Activated B cell treated with CpG ODN at 0.5 μM for 24 hours (primary cell): ENCODE measurements at regions of chr20 and their contacts with region 1.

Region 1: DNA sequence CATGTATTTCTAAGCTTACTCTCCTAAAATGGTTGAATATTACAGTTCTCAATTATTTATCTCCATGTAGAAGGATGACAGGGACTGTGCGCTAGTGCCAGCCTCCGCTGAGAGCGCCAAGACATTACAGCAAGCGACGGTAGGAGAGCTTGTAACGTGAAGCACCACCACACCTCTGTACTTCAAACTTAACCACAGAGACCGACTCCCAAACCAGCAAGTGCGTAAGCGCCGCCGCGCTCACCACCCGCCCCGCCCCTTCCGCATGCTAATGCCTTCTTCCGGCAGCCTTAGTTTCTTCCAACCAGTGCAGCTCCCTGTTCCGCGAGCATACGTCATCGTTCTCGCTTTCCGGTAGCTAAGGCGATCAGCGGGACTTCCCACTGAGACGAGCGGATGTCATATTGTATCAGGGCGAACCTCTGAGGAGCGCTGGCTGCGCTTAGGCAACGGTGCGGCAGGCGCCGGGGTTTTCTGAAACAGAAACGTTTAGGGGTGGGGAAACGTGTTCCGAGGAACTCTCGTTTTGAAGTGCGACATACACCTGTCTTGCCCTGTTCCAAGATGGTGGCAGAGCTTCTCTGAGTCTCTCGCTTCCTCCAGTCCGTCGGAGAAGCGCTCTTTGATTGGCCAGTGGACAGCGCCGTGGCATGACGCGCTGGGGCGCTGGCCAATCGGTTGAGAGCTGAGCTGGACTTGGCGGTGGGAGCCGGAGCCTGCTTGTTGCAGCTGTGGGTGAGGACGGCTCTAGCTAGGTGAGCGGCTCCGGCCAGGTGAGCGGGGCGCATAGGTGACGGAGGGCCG is at the start of gene SEC23B:
- DNase-seq: peak; percentile 92
- ATAC-seq: peak; percentile 92
- H3K4me3 Mint-ChIP-seq: peak within 1 kb of the TSS; percentile 100
- H3K27ac Mint-ChIP-seq: peak within 1 kb of the TSS; percentile 100
- H3K4me1 Mint-ChIP-seq: peaks cover 36% of the 10 kb centered on the region
- H3K27me3 Mint-ChIP-seq: peaks cover 2% of the 10 kb centered on the region
- CTCF ChIP-seq: no peak
- total RNA-seq, gene SEC23B: 52.0 and 56.6 TPM in 2 replicates

Region 2: DNA sequence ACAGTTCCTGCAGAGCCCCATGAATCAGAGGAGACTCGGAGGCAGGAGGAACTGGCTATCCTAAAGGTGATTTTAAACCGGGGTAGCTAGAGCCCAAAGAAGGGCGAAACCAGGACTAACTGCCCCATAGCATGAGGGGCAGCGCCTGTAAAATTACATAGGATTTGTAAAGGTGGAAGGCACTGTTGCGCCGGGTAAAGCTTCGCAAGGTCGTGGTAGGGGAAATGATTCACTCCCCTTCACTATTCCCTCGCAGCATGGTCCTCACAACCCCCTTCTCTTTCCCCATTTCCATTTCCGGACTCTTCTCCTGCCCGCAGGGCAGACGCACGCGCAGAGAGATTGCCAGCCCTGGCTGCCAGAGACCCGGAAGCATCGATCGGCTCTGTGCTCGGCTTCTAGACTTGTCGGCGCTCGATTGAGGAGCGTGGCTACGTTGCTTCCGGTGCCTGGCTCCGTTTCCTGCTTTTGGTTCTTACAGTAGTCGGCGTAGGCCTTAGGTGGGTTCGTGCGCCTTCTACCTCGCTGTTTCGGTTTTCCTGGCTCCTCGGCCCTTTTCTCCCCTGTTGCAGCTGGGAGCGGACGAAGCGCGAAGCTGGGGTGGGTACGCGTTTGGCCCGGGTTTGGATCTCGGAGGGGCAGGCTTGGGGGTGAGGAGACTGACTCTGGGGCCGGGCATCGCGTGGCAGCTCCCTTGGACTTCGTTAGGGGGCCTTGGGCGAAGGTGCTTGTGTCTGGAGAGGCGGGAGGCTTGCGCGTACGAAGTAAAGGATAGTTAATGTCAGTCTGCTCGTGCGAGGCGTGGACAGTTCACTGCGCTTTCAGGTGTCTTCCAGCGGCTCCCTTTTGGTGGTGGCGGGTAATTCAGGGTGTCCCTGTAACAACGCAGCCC is 1777.6 kb before region 1 on chr20 and contains the start of gene SNRPB2:
- CTCF ChIA-PET with region 1: no interaction called
- POLR2A ChIA-PET with region 1: no interaction called
- intact Hi-C with region 1: loop called (anchors 2 kb)
- DNase-seq: peak; percentile 76
- ATAC-seq: peak; percentile 97
- H3K4me3 Mint-ChIP-seq: peak within 1 kb of the TSS; percentile 100
- H3K27ac Mint-ChIP-seq: peak within 1 kb of the TSS; percentile 99
- H3K4me1 Mint-ChIP-seq: peaks cover 31% of the 10 kb centered on the region
- H3K27me3 Mint-ChIP-seq: peaks cover 17% of the 10 kb centered on the region
- CTCF ChIP-seq: no peak
- total RNA-seq, gene SNRPB2: 61.1 and 66.3 TPM in 2 replicates

Region 3: DNA sequence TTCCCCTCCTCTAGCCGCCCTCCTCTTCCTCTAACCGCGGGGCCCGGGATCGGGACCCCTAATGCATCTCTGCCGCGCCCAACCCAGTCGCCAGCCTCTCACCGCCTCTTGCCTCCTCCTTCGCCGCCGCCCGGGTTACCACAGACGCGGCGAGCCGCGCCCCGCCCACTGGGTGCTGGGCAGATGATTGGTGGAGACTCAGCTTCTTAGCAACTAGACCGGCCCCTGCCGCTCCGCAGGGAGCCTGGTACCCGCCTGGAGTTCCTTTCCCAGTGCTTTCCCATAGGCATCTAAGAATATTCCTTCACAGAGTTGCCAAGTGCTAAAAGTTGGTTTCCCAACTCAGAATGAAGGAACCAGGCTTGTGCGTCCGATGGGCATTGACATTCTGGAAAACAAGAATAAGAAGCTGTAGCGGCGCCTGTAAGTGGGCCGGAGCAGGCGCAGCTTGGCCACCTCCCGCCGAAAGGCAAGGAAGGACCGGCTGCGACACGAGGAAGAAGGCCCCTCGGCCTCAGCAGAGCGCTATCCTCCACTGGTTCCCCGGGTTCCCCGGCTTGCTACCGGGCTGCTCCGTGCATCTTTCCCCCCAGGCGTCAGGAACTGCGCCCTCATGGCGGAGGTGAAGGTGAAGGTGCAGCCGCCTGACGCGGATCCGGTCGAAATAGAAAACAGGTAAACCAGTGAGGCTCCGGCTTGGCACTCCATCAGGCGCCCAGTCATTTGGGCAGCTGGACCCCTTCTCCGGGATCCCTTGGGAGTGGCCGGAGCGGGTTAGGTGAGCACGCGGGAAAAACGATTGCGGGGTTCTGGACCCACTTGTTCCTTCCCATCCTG is 40.3 kb before region 1 on chr20 and contains the starts of genes DZANK1 and POLR3F:
- CTCF ChIA-PET with region 1: interaction called, 6 read pairs
- POLR2A ChIA-PET with region 1: interaction called, 72 read pairs
- intact Hi-C with region 1: loop called (anchors 1 kb)
- DNase-seq: peak; percentile 88
- ATAC-seq: peak; percentile 96
- H3K4me3 Mint-ChIP-seq: peak within 1 kb of the TSS; percentile 99
- H3K27ac Mint-ChIP-seq: peak within 1 kb of the TSS; percentile 95
- H3K4me1 Mint-ChIP-seq: peaks cover 27% of the 10 kb centered on the region
- H3K27me3 Mint-ChIP-seq: no peaks in the 10 kb centered on the region
- CTCF ChIP-seq: no peak
- total RNA-seq, gene DZANK1: 5.3 and 6.0 TPM in 2 replicates
- total RNA-seq, gene POLR3F: 13.3 and 14.5 TPM in 2 replicates

Region 4: GRCh38 chr20:18496740-18497592 is 10.5 kb before region 1 on chr20 and contains the start of gene RBBP9:
- CTCF ChIA-PET with region 1: interaction called, 4 read pairs
- POLR2A ChIA-PET with region 1: interaction called, 123 read pairs
- intact Hi-C with region 1: loop called (anchors 1 kb)
- DNase-seq: peak; percentile 67
- ATAC-seq: peak; percentile 99
- H3K4me3 Mint-ChIP-seq: peak within 1 kb of the TSS; percentile 99
- H3K27ac Mint-ChIP-seq: peak within 1 kb of the TSS; percentile 87
- H3K4me1 Mint-ChIP-seq: peaks cover 16% of the 10 kb centered on the region
- H3K27me3 Mint-ChIP-seq: peaks cover 3% of the 10 kb centered on the region
- CTCF ChIP-seq: no peak
- total RNA-seq, gene RBBP9: 10.6 TPM in 2 replicates

Region 5: GRCh38 chr20:18566892-18567742 is 59.7 kb after region 1 on chr20 and contains the start of gene SMIM26:
- CTCF ChIA-PET with region 1: no interaction called
- POLR2A ChIA-PET with region 1: interaction called, 30 read pairs
- intact Hi-C with region 1: loop called (anchors 1 kb)
- DNase-seq: peak; percentile 91
- ATAC-seq: peak; percentile 96
- H3K4me3 Mint-ChIP-seq: peak within 1 kb of the TSS; percentile 94
- H3K27ac Mint-ChIP-seq: peak within 1 kb of the TSS; percentile 94
- H3K4me1 Mint-ChIP-seq: peaks cover 23% of the 10 kb centered on the region
- H3K27me3 Mint-ChIP-seq: no peaks in the 10 kb centered on the region
- CTCF ChIP-seq: no peak
- total RNA-seq, gene SMIM26: 48.9 and 51.7 TPM in 2 replicates

Region 6: DNA sequence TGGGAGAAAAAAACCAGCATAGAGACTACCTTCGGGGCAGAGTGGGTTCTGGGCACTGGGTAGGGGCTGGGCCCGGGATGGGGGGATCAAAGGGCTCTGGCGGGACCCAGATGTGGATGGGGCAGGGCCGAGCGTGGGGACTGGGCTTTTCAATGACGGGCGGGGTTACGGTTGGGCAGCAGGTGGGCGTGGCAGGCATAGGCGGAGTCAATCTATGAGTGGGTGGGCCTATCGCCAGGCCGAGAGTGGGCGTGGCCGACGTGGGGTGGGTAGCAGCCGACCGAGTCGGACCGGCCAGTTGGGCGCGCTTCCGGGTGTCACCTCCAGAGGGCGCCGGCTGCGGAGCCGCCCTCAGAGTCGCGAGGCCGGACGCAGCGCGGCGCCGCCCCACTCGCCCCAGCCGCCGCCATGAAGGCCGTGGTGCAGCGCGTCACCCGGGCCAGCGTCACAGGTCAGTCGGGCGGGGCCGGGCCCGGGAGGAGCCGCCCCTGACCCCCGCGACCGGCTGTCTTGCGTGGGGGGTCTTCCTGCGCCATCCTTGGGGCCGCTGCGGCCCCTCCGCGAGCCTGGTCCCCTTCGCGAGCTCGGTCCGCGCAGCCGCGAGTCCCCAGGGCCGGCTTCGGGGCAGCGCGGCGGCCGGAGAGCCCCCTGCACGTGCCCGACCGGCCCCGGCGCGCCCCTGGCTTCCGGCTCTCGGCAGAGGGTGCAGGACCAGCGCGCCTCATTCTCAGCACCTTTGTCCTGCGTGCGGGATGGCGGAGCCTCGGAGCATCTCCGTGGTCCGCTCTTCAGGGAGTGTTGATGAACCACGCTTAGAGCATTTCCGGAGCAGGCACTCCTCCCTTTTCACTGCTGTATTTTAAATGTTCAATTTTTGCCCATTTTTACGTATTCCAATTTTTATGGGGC is 80.5 kb after region 1 on chr20 and contains the start of gene DTD1:
- CTCF ChIA-PET with region 1: no interaction called
- POLR2A ChIA-PET with region 1: interaction called, 15 read pairs
- intact Hi-C with region 1: loop called (anchors 1 kb)
- DNase-seq: peak; percentile 88
- ATAC-seq: peak; percentile 95
- H3K4me3 Mint-ChIP-seq: peak within 1 kb of the TSS; percentile 93
- H3K27ac Mint-ChIP-seq: peak within 1 kb of the TSS; percentile 90
- H3K4me1 Mint-ChIP-seq: peaks cover 24% of the 10 kb centered on the region
- H3K27me3 Mint-ChIP-seq: peaks cover 9% of the 10 kb centered on the region
- CTCF ChIP-seq: no peak
- total RNA-seq, gene DTD1: 26.3 and 27.5 TPM in 2 replicates